ENCODE measurements at regions of chr2 and their contacts with region 1.

Region 1: GRCh38 chr2:182818541-182819324 is 47.7 kb downstream of the FRZB start:
- DNase-seq: peak; percentile 2
- H3K4me3 ChIP-seq: no peak overlapping the region
- H3K27ac ChIP-seq: peak overlapping the region in 1 of 2 experiments; percentile 18; a peak in 1 of 4 replicates
- H3K4me1 ChIP-seq: peaks cover 2 to 7% of the 10 kb centered on the region in 2 experiments; a peak in 3 of 4 replicates
- H3K27me3 ChIP-seq: no peaks in the 10 kb centered on the region
- CTCF ChIP-seq: no peak
- EP300 ChIP-seq: no peak
- RAD21 ChIP-seq: no peak

Region 2: GRCh38 chr2:182807319-182807718 is 11.4 kb before region 1 on chr2:
- CTCF ChIA-PET with region 1: interaction called, 15 read pairs
- POLR2A ChIA-PET with region 1: no interaction called
- DNase-seq: no peak
- H3K4me3 ChIP-seq: no peak overlapping the region
- H3K27ac ChIP-seq: no peak overlapping the region
- H3K4me1 ChIP-seq: no peaks in the 10 kb centered on the region
- H3K27me3 ChIP-seq: no peaks in the 10 kb centered on the region
- CTCF ChIP-seq: no peak
- EP300 ChIP-seq: no peak
- RAD21 ChIP-seq: no peak